ENCODE measurements at regions of chr5 and their contacts with region 1.

Region 1: DNA sequence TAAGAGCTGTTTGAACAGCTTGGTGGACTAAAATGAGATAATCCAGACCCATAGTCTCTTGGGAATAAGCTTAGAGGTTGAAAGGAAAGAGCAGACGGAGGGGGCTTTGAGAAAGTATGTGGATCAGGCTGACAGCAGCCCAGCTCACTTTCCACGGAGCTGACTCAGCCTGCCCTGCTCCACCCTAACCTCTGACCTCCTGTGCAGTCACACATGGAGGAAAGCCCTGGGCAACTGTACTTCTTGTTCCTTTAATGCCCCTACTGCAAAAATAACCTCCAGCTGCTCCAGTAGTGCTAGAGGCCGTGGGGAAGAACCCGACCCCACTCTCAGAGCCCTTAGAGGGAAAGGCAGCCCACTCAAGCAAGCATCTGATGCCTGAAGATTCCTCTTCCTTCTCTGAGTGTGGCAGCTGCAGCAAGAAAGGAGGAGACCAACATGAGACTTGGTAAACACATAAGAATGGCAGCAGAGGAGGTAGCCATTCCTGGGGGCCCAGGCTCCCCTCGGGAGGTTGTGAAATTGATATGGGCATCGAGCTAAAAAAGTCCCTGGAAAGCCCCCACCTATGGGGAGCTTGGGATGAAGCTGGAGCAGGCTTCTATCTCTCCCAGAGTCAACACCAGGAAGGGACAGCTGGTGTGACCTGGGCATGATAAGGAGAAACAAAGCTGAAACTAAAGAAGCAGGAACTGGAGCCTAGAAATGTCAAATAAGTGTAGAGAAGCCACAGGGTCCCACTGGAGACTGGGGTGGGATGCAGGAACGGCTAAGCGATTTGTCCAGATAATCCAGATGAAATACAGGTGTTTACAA is 204.3 kb downstream of the PIK3R1 start:
- DNase-seq: no peak

Region 2: DNA sequence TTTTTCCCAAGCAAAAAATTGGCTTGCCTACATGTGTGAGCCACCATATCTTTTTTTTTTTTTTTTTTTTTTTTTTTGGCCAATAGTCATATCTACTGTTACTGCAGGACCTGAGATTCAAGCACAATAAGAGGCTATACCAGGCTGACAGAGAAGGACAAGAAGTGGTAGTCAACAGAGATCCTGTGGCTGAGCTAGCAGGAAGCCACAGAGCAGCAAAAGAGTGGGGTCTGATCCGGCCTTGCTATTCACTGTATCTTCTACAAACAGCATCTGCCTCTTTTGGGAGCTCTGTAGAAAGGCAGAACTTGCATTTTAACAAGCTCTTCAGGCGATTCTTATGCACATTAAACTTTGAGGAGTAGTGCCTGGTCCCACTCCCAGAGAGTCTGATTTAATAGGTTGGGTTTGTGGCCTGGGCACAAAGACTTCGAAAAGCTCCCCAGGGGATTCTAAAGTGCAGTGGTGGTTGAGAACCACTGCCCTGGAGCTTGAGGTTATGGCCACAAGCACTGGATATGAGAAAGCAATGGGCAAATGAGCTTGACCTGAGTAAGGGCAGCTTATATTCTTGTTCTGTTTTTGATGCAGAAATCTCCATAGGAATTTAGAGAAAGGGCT is 41.5 kb before region 1 on chr5:
- intact Hi-C with region 1: loop called (anchors 5 kb)
- DNase-seq: no peak

Region 3: DNA sequence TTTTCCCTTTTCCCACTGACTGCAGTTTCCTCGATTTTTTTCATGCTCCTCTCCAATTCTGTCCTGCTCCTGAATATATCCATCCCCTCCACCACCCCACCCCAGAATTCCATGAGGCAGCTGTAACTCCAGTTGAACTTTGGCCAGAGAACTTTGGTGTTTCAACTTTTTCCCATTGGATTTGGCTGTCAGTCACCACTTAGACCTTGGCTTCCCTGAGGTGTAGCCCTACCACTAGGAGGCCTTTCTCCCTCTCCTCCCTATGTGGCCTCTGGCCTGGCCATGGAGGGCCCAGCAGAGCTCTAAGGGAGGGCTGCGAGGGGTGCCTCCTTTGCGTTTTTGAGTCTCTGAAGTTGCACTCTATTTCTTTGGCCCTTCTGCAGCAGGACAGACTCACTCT is 57.0 kb after region 1 on chr5:
- intact Hi-C with region 1: no loop called
- DNase-seq: no peak